Activated T-helper 1 cell treated with anti-CD3 and anti-CD28 coated beads, Interleukin-12 subunit alpha, Interleukin-12 subunit beta, Interleukin-2, Interleukin-4 antibody, amounts not matched to agents 30 ng/mL and 10 ng/mL and 1 ng/mL, durations not matched to agents 14 hours and 24 hours and 36 hours (primary cell): ENCODE measurements at regions of chr17 and their contacts with region 1.

Region 1: GRCh38 chr17:41738077-41738735 is 3.8 kb upstream of the HAP1 start:
- DNase-seq: peak; percentile 76
- H3K4me3 Mint-ChIP-seq: no peak overlapping the region
- H3K27ac Mint-ChIP-seq: no peak overlapping the region
- H3K4me1 Mint-ChIP-seq: peaks cover 5% of the 10 kb centered on the region
- H3K27me3 Mint-ChIP-seq: peaks cover 34% of the 10 kb centered on the region

Region 2: GRCh38 chr17:41688699-41689496 is 49.3 kb before region 1 on chr17 and contains the start of gene EIF1:
- intact Hi-C with region 1: loop called (anchors 5 kb)
- DNase-seq: peak; percentile 100
- H3K4me3 Mint-ChIP-seq: peak within 1 kb of the TSS; percentile 96
- H3K27ac Mint-ChIP-seq: peak within 1 kb of the TSS; percentile 96
- H3K4me1 Mint-ChIP-seq: peaks cover 29% of the 10 kb centered on the region
- H3K27me3 Mint-ChIP-seq: peaks cover 3% of the 10 kb centered on the region
- total RNA-seq, gene EIF1: 876 and 893 TPM in 2 replicates

Region 3: GRCh38 chr17:41786227-41787020 is 48.2 kb after region 1 on chr17 and contains the start of gene JUP:
- intact Hi-C with region 1: loop called (anchors 1 kb)
- DNase-seq: peak; percentile 87
- H3K4me3 Mint-ChIP-seq: peak within 1 kb of the TSS; percentile 68
- H3K27ac Mint-ChIP-seq: no peak within 1 kb of the TSS
- H3K4me1 Mint-ChIP-seq: peaks cover 11% of the 10 kb centered on the region
- H3K27me3 Mint-ChIP-seq: peaks cover 52% of the 10 kb centered on the region
- total RNA-seq, gene JUP: 0.12 and 0.39 TPM in 2 replicates

Region 4: DNA sequence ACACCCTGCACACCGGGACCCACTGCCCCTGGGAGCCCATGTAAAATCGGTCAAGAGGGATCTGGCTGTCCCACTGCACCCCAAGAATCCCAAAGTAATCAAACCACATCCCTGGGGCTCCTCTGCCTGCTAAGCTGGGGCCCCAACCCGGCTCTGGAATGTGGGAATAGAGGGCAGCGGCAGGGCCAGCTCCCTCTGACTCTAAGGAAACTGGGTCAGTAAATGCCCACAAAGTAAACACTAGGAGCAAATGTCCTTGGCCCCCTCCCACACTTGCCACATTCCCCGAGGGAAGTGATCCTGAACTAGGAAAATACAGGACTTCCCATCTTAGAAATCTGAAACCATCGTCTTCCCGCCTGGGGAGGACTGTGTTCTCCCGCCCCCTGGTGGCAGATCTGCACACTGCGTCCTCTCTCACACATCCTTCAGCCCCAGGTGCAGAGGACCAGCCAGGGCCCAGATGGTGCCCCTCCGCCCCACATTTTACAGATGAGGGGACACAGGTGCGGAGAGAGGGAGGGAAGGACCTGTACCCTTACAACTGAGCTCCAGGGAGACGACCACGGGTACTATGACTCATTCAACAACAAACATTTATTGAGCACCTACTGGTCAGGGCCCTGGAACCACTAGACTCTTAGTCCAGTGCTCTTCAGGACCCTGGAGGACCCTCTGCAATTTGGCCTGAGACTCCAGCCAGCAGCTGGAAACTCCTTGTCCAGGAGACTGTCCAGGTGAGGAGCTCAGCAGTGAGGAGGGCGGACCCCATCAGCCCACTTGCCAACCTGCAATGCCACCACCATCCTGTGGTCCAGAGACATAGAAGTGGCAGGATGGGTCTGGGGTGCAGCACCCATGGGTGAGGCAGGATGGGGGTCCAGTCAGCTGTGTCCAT is 63.4 kb after region 1 on chr17:
- intact Hi-C with region 1: loop called (anchors 1 kb)
- DNase-seq: peak; percentile 50
- H3K4me3 Mint-ChIP-seq: no peak overlapping the region
- H3K27ac Mint-ChIP-seq: no peak overlapping the region
- H3K4me1 Mint-ChIP-seq: no peaks in the 10 kb centered on the region
- H3K27me3 Mint-ChIP-seq: peaks cover 1% of the 10 kb centered on the region

Region 5: DNA sequence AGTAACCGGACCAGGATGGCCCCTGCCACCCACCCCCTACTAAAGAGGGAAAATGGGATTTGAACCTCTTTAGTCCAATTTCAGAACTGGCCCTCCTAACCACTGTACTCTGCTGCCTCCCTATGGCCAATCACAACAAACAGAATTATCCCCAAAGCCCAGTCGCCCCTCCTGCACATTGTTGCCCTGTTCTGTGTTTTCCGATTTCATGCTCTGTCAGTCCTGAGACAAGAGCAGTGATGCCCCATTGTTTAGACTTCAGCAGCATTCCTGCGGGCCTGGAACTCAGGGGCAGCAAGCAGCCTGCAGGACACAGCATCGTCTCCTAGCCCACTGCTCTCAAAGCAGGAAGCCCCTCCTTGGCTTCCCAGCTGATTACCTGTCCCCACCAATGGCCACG is 147.5 kb after region 1 on chr17:
- intact Hi-C with region 1: loop called (anchors 1 kb)
- DNase-seq: no peak
- H3K4me3 Mint-ChIP-seq: no peak overlapping the region
- H3K27ac Mint-ChIP-seq: no peak overlapping the region
- H3K4me1 Mint-ChIP-seq: no peaks in the 10 kb centered on the region
- H3K27me3 Mint-ChIP-seq: no peaks in the 10 kb centered on the region